MCF 10A (cell line): ENCODE measurements at regions of chr9 and their contacts with region 1.

Region 1: GRCh38 chr9:87713278-87713987 is 12.5 kb upstream of the CTSL start:
- DNase-seq: peak; percentile 94
- H3K4me3 Mint-ChIP-seq: peak overlapping the region; percentile 71
- H3K27ac Mint-ChIP-seq: peak overlapping the region; percentile 85
- H3K4me1 Mint-ChIP-seq: peaks cover 17% of the 10 kb centered on the region
- H3K27me3 Mint-ChIP-seq: no peaks in the 10 kb centered on the region
- CTCF ChIP-seq: no peak

Region 2: GRCh38 chr9:87684627-87685219 is 28.7 kb before region 1 on chr9:
- CTCF ChIA-PET with region 1: interaction called, 11 read pairs
- POLR2A ChIA-PET with region 1: no interaction called
- intact Hi-C with region 1: no loop called
- DNase-seq: peak; percentile 70
- H3K4me3 Mint-ChIP-seq: no peak overlapping the region
- H3K27ac Mint-ChIP-seq: no peak overlapping the region
- H3K4me1 Mint-ChIP-seq: peaks cover 6% of the 10 kb centered on the region
- H3K27me3 Mint-ChIP-seq: no peaks in the 10 kb centered on the region
- CTCF ChIP-seq: peak; percentile 67

Region 3: DNA sequence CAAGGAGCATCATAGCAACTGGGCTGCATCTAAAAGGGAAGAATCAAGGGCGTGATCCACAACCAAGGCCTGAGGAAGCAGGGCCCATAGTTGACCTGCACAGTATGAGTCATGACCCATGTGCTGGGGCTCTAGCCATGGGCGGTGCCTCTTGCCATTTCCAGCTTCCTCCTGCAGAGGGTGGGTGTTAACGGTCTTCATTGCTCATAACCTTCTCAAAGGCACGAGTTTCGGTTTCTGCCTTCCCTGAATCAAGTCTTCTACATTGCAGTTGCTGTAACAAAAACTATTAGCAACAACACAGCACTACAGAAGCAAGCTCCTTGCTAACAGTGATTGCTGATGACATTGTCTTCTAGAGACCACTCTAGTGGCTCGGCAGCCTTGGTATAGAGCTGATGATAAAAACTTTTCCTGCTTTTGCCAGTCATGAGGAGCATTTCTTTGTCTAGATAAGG is 79.4 kb after region 1 on chr9:
- CTCF ChIA-PET with region 1: interaction called, 3 read pairs
- POLR2A ChIA-PET with region 1: interaction called, 10 read pairs
- intact Hi-C with region 1: loop called (anchors 1 kb)
- DNase-seq: peak; percentile 96
- H3K4me3 Mint-ChIP-seq: peak overlapping the region; percentile 49
- H3K27ac Mint-ChIP-seq: peak overlapping the region; percentile 77
- H3K4me1 Mint-ChIP-seq: peaks cover 22% of the 10 kb centered on the region
- H3K27me3 Mint-ChIP-seq: no peaks in the 10 kb centered on the region
- CTCF ChIP-seq: peak; percentile 20